ENCODE measurements at regions of chr5 and their contacts with region 1.

Region 1: DNA sequence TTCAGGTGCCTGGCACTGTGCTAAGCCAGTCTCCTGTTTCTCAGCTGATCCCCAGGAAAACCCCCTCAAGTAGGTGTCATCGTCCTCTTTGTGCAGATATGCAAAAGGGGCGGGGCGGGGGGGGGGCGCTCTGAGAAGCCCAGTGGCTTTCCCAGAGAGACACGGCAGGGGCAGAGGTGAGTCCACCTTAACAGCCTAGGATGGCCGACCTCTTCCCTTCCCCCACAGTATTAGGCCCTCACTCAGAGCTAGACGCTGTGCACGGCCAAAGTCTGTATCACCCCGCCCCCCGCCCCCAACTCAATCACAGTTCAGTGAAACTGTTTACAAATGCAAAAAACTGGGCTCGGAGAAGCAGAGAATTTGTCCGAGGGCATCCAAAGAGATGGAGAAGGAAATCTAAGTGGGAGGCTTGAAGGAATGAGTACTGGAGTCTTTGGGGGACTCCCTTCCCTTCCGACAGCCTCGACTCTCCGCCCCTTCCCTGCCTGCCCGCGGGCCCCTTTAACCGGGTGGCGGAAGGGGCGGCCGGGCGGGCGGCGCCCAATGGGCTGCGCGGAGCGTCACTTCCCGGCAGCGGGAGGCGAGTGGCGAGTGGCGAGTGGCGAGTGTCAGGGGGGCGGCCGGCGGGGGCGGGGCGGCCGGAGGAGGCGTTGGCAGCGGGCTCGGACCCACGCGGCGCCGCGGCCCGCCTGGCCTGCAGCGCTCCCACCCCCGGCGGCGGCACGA is at the start of gene ERGIC1:
- DNase-seq: no peak
- ATAC-seq: peak; percentile 86
- H3K4me3 ChIP-seq: peak within 1 kb of the TSS; percentile 97
- H3K27ac ChIP-seq: peak within 1 kb of the TSS; percentile 95
- H3K4me1 ChIP-seq: peaks cover 33% of the 10 kb centered on the region
- H3K27me3 ChIP-seq: no peaks in the 10 kb centered on the region
- CTCF ChIP-seq: no peak
- EP300 ChIP-seq: no peak
- POLR2A ChIP-seq: peak; percentile 72
- RAD21 ChIP-seq: no peak
- polyA plus RNA-seq, gene ERGIC1: 8.8 to 21.0 TPM

Region 2: DNA sequence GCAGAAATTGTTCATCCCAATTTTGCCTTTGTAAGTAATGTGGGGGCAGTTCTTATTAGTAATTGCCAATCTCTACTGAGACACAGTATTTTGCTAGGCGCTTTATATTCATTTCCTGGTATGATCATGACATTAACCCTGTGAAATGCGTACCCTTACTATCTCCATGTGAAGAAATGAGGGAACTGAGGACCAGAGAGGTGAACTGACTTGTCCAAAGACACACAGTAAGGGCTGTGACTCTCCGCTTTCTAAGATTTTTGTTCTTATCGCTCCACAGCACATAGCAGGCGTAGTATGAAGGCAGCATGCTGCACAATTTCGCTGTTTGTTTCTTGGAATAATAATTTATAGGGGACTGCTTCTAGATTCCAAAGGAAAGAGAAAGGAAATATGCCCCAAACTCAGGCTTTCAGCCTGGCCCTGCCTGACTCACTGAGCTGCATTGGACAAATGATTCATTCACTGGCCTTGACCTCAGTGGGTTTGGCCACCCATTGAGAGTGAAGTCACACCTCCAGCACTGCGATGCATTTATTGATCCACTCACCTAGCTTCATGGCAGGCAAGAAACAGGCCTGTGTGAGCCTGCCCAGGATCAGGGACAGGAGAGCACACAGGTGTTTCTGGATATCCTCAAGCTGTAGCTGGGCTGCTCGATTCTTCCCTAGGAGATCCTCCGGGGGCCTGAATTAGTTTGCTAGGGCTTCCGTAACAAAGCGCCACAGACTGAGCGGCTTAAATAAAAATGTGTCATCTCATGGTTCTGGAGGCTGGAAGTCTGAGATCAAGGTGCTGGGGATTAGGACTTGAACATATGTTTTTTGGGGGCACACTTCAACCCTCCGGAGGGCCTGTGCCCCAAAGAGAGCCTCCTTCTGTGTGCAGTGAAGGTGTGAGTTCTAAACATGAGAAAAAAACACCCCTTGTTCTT is 55.7 kb before region 1 on chr5:
- CTCF ChIA-PET with region 1: interaction called, 37 read pairs
- POLR2A ChIA-PET with region 1: interaction called, 45 read pairs
- RAD21 ChIA-PET with region 1: interaction called, 35 read pairs
- SMC1A ChIA-PET with region 1: interaction called, 33 read pairs
- in situ Hi-C with region 1: no loop called
- intact Hi-C with region 1: no loop called
- DNase-seq: no peak
- ATAC-seq: peak; percentile 49
- H3K4me3 ChIP-seq: peak overlapping the region; percentile 34
- H3K27ac ChIP-seq: peak overlapping the region; percentile 93
- H3K4me1 ChIP-seq: peaks cover 21% of the 10 kb centered on the region
- H3K27me3 ChIP-seq: no peaks in the 10 kb centered on the region
- CTCF ChIP-seq: no peak
- EP300 ChIP-seq: no peak
- POLR2A ChIP-seq: no peak
- RAD21 ChIP-seq: no peak

Region 3: GRCh38 chr5:172849606-172850453 is 16.0 kb after region 1 on chr5:
- CTCF ChIA-PET with region 1: interaction called, 22 read pairs
- POLR2A ChIA-PET with region 1: interaction called, 34 read pairs
- RAD21 ChIA-PET with region 1: interaction called, 3 read pairs
- SMC1A ChIA-PET with region 1: interaction called, 44 read pairs
- in situ Hi-C with region 1: no loop called
- intact Hi-C with region 1: no loop called
- DNase-seq: peak; percentile 52
- ATAC-seq: peak; percentile 88
- H3K4me3 ChIP-seq: peak overlapping the region; percentile 21; the same call in 1 of the 2 replicates
- H3K27ac ChIP-seq: peak overlapping the region; percentile 73
- H3K4me1 ChIP-seq: peaks cover 22% of the 10 kb centered on the region
- H3K27me3 ChIP-seq: no peaks in the 10 kb centered on the region
- CTCF ChIP-seq: no peak
- EP300 ChIP-seq: no peak
- POLR2A ChIP-seq: peak; percentile 42; the same call in 1 of the 2 replicates
- RAD21 ChIP-seq: no peak

Region 4: DNA sequence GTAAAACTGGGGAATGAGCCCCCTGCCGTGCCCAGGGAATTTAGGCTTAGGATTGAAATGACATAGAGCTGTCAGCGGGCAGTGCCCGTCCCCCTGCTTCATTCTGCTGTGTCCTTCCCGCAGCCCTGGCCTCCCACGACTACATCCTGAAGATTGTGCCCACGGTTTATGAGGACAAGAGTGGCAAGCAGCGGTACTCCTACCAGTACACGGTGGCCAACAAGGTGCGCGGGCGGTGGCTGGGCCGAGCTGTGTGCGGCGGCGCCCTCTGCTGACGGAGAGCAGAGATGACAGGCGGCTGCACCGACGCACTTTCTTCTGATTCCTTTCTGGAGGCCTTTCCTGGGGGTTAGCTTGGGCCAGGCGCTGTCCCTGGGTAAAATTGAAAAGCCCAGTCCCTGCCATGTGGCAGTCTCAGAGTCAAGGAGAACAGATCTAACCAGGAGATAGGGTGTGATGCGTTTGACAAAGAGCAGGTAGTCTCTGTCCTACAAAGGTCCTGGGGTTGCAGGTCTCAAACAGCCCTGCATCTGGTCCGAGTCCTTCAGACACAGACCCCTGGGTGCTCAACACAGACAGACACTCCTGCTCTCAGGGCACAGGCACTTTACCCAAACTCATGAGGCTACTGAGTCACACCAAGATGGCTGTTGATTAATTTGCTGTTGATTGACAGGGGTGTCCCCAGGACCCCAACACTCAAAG is 98.6 kb after region 1 on chr5:
- CTCF ChIA-PET with region 1: interaction called, 11 read pairs
- POLR2A ChIA-PET with region 1: no interaction called
- RAD21 ChIA-PET with region 1: interaction called, 3 read pairs
- SMC1A ChIA-PET with region 1: interaction called, 4 read pairs
- in situ Hi-C with region 1: no loop called
- intact Hi-C with region 1: no loop called
- DNase-seq: no peak
- ATAC-seq: peak; percentile 97
- H3K4me3 ChIP-seq: no peak overlapping the region
- H3K27ac ChIP-seq: no peak overlapping the region
- H3K4me1 ChIP-seq: peaks cover 5% of the 10 kb centered on the region; the same call in 1 of the 2 replicates
- H3K27me3 ChIP-seq: no peaks in the 10 kb centered on the region
- CTCF ChIP-seq: peak; percentile 94 to 96 (median 96)
- EP300 ChIP-seq: no peak
- POLR2A ChIP-seq: no peak
- RAD21 ChIP-seq: peak; percentile 95

Measured in GM12878 (cell line).